ENCODE measurements at regions of chr1 and their contacts with region 1.

Region 1: DNA sequence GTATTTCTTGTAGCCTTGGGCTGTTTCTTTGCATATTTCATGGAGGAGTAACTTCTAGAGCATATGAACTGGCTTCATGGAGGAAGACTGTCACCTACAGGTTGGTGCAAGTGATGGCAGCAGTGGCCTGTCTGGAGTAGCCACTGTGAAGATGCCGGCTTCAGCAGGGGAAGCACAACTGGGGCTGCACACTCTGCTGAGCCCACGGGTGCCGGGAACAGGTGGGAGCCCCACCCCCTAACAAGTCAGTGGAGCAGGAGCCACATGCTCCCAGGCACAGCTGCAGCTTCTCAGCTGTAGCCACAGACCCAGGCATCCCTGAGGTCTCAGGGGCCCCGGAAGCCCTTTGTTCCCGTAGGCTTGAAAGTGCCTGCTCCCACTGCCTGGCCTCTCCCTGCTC is 43.2 kb upstream of the C1orf185 start:
- DNase-seq: peak; percentile 59
- ATAC-seq: peak; percentile 99
- H3K4me3 ChIP-seq: peak overlapping the region in 2 of 3 experiments; percentile 6 to 59; a peak in 2 of 6 replicates
- H3K27ac ChIP-seq: no peak overlapping the region
- H3K4me1 ChIP-seq: no peaks in the 10 kb centered on the region; the same call in 1 of the 2 replicates
- H3K27me3 ChIP-seq: no peaks in the 10 kb centered on the region; a peak in 1 of 5 replicates
- CTCF ChIP-seq: peak; percentile 96
- EP300 ChIP-seq: no peak
- POLR2A ChIP-seq: no peak
- RAD21 ChIP-seq: peak; percentile 93

Region 2: DNA sequence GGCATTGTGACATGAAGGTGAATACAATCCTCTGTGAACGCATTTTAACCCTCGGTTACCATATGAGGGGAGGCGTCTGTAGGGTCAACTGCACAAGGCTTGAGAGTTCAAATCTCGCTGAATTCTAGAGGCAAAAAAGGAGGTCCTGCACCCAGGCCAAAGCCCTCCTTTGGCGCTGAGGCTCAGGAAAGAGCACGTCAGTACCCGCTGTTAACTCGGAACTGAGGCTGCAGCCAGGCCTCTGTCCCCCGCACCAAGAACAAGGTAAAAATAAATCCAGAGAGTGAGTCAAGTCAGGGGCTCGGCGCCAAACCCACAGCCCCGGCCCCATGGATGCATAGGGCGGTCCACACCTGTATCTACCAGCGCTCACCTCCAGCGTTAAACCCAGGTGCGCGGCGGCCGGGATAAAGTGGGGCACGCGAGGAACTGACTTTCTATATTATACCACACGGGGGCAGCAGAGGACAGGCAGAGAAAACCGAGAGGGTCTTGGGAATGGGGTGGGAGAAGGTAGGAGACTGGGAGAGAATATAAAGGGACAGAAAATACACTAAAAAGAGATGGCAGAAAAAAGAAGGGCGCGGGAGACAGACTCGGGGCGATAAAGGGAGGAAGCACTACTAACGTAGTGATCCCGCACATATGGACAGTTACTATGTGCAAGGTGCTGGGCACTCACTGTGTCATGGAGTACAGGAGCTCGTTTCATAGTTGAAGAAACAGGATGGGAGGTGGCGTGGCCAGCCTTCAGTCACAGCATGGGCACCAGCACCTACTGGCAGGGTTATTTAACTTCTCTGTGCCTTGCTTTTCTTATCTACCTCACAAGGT is 690.5 kb before region 1 on chr1:
- CTCF ChIA-PET with region 1: interaction called, 3 read pairs
- POLR2A ChIA-PET with region 1: no interaction called
- in situ Hi-C with region 1: loop called (anchors 10 kb)
- intact Hi-C with region 1: loop called (anchors 2 kb)
- DNase-seq: peak; percentile 17
- ATAC-seq: peak; percentile 88
- H3K4me3 ChIP-seq: peak overlapping the region in 1 of 3 experiments; percentile 41; a peak in 1 of 6 replicates
- H3K27ac ChIP-seq: no peak overlapping the region
- H3K4me1 ChIP-seq: no peaks in the 10 kb centered on the region
- H3K27me3 ChIP-seq: peaks cover 0 to 15% of the 10 kb centered on the region in 2 experiments; a peak in 3 of 5 replicates
- CTCF ChIP-seq: peak; percentile 84
- EP300 ChIP-seq: no peak
- POLR2A ChIP-seq: no peak
- RAD21 ChIP-seq: peak; percentile 62; the same call in 1 of the 2 replicates

Region 3: GRCh38 chr1:50620680-50621329 is 438.1 kb before region 1 on chr1:
- CTCF ChIA-PET with region 1: no interaction called
- POLR2A ChIA-PET with region 1: no interaction called
- in situ Hi-C with region 1: no loop called
- intact Hi-C with region 1: loop called (anchors 5 kb)
- DNase-seq: peak; percentile 45
- ATAC-seq: peak; percentile 93
- H3K4me3 ChIP-seq: no peak overlapping the region
- H3K27ac ChIP-seq: peak overlapping the region; percentile 13
- H3K4me1 ChIP-seq: no peaks in the 10 kb centered on the region; the same call in 1 of the 2 replicates
- H3K27me3 ChIP-seq: no peaks in the 10 kb centered on the region
- CTCF ChIP-seq: peak; percentile 66
- EP300 ChIP-seq: no peak
- POLR2A ChIP-seq: no peak
- RAD21 ChIP-seq: 0 out of 2 replicates have a peak, but pooled peaks have one; percentile 26

Region 4: DNA sequence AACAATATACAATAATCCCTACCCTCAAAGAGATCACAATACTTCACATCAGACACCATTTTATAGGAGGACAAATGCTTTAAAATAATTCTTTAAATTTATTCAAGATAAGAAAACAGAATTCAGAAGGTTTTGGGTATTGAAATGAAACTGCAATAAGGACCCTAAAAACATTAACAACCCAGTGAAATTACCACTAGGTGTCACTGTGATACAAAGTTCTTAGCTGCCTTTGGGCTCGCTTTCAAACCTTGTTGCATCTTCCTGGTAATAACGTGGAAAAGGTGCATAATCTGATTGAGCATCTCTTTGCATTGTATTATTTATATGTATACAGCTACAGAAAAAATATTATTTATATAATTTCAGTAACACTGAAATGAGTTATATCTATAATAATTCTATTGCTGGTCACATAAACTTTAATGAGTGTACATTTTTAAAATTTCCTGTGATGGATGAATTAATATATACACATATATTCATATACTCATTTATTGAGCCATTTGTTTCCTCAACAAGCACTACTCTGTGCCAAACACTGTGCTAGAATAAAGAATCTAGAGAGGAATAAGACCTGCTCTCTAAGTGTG is 284.0 kb before region 1 on chr1:
- CTCF ChIA-PET with region 1: interaction called, 23 read pairs
- POLR2A ChIA-PET with region 1: no interaction called
- in situ Hi-C with region 1: loop called (anchors 10 kb)
- intact Hi-C with region 1: loop called (anchors 1 kb)
- DNase-seq: peak; percentile 63
- ATAC-seq: peak; percentile 59; the same call in 1 of the 3 replicates
- H3K4me3 ChIP-seq: no peak overlapping the region
- H3K27ac ChIP-seq: no peak overlapping the region
- H3K4me1 ChIP-seq: peaks cover 14% of the 10 kb centered on the region
- H3K27me3 ChIP-seq: no peaks in the 10 kb centered on the region
- CTCF ChIP-seq: peak; percentile 76
- EP300 ChIP-seq: no peak
- POLR2A ChIP-seq: no peak
- RAD21 ChIP-seq: peak; percentile 56

Region 5: DNA sequence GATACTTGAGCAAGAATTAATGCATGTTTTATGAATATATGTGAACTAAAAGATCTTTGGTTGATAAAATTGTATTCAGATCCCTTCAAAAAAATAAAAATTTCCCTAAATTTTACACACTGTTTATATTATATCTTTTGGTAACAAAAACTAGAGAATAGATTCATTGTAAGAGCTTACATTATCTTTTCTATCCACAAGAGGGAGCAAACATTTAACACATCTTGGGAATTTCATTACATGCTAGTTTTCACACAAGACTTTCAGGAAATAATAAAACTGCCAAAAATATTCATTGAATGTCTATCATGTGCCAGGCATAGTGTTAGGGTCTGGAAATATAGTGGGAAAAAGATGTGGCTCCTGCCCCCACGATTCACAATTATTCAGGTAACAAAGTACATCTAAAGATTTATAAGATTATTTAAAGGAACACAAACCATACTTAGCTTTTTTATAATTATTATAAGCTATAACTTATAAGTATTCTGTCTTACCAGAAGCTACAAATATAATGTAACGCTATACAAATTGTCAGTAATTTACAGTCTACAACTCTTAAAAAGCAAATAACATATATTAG is 129.4 kb before region 1 on chr1:
- CTCF ChIA-PET with region 1: interaction called, 21 read pairs
- POLR2A ChIA-PET with region 1: no interaction called
- in situ Hi-C with region 1: no loop called
- intact Hi-C with region 1: loop called (anchors 2 kb)
- DNase-seq: peak; percentile 47
- ATAC-seq: no peak
- H3K4me3 ChIP-seq: no peak overlapping the region
- H3K27ac ChIP-seq: no peak overlapping the region
- H3K4me1 ChIP-seq: peaks cover 18% of the 10 kb centered on the region
- H3K27me3 ChIP-seq: no peaks in the 10 kb centered on the region
- CTCF ChIP-seq: peak; percentile 38
- EP300 ChIP-seq: no peak
- POLR2A ChIP-seq: no peak
- RAD21 ChIP-seq: no peak

Measured in HepG2 (cell line).